Caco-2 (cell line): ENCODE measurements at regions of chr1 and their contacts with region 1.

Region 1: GRCh38 chr1:183159960-183160359 is 26.1 kb upstream of the LAMC2 start:
- DNase-seq: peak; percentile 95 to 97
- H3K4me3 ChIP-seq: 0 out of 2 replicates have a peak overlapping the region, but pooled peaks have one; percentile 1
- H3K4me3 Mint-ChIP-seq: peak overlapping the region; percentile 52
- H3K27ac Mint-ChIP-seq: peak overlapping the region; percentile 69
- H3K4me1 ChIP-seq: peaks cover 29% of the 10 kb centered on the region
- H3K4me1 Mint-ChIP-seq: no peaks in the 10 kb centered on the region
- H3K27me3 ChIP-seq: no peaks in the 10 kb centered on the region
- H3K27me3 Mint-ChIP-seq: no peaks in the 10 kb centered on the region
- CTCF ChIP-seq: no peak

Region 2: GRCh38 chr1:182886985-182887384 is 273.0 kb before region 1 on chr1:
- CTCF ChIA-PET with region 1: no interaction called
- POLR2A ChIA-PET with region 1: no interaction called
- intact Hi-C with region 1: no loop called
- DNase-seq: no peak
- H3K4me3 ChIP-seq: no peak overlapping the region
- H3K4me3 Mint-ChIP-seq: no peak overlapping the region
- H3K27ac Mint-ChIP-seq: no peak overlapping the region
- H3K4me1 ChIP-seq: no peaks in the 10 kb centered on the region
- H3K4me1 Mint-ChIP-seq: no peaks in the 10 kb centered on the region
- H3K27me3 ChIP-seq: no peaks in the 10 kb centered on the region
- H3K27me3 Mint-ChIP-seq: no peaks in the 10 kb centered on the region
- CTCF ChIP-seq: no peak

Region 3: DNA sequence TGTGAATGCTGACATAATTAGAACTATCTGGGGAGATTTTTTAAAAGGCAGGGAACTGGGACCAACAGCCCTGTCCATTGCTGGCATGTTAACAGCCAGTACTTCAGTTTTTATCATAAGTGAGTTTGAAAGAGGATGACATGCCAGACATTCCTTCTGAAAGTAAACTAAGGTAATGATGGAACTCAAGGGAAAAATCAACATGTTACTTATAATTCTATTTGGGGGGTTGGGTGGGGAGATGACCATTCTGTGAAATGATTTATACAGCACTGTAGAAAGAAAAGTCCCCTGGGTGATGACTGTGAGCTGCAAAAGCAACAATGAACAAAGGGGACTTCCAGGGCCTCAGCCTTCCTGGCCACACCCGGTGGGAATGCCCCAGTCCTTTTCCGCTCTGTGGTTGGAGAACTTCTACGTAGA is 20.7 kb after region 1 on chr1:
- CTCF ChIA-PET with region 1: no interaction called
- POLR2A ChIA-PET with region 1: no interaction called
- intact Hi-C with region 1: loop called (anchors 1 kb)
- DNase-seq: peak; percentile 53 to 76
- H3K4me3 ChIP-seq: no peak overlapping the region
- H3K4me3 Mint-ChIP-seq: peak overlapping the region; percentile 14
- H3K27ac Mint-ChIP-seq: peak overlapping the region; percentile 30
- H3K4me1 ChIP-seq: peaks cover 56% of the 10 kb centered on the region
- H3K4me1 Mint-ChIP-seq: peaks cover 36% of the 10 kb centered on the region
- H3K27me3 ChIP-seq: no peaks in the 10 kb centered on the region
- H3K27me3 Mint-ChIP-seq: no peaks in the 10 kb centered on the region
- CTCF ChIP-seq: no peak